Caco-2 (cell line): ENCODE measurements at regions of chr12 and their contacts with region 1.

Region 1: DNA sequence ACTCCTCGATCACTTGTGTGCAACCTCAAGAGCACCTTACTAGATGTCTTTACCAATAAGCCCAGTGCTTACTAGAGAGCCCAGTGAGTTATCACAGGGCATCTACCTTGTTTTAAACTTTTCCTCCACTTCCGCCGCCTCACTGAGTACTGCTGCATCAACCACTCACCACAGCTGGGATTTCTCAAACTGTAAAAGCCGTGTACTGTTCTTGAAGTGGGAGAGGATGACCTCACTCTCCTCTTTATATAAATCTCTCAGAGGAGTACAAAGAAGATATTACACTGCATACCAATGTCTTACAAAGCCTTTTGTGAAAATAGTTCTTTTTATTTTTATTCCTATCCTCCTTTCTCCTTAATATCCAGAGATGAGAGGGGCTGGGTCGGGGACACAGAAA is 94.1 kb downstream of the PLCZ1 start:
- DNase-seq: no peak
- H3K4me3 ChIP-seq: no peak overlapping the region
- H3K4me3 Mint-ChIP-seq: no peak overlapping the region
- H3K27ac Mint-ChIP-seq: no peak overlapping the region
- H3K4me1 ChIP-seq: no peaks in the 10 kb centered on the region
- H3K4me1 Mint-ChIP-seq: no peaks in the 10 kb centered on the region
- H3K27me3 ChIP-seq: no peaks in the 10 kb centered on the region; the same call in 1 of the 2 replicates
- H3K27me3 Mint-ChIP-seq: peaks cover 18% of the 10 kb centered on the region
- CTCF ChIP-seq: no peak

Region 2: GRCh38 chr12:17928708-17929366 is 714.8 kb before region 1 on chr12:
- CTCF ChIA-PET with region 1: no interaction called
- POLR2A ChIA-PET with region 1: no interaction called
- intact Hi-C with region 1: no loop called
- DNase-seq: peak; percentile 33 to 61
- H3K4me3 ChIP-seq: no peak overlapping the region
- H3K4me3 Mint-ChIP-seq: peak overlapping the region; percentile 40
- H3K27ac Mint-ChIP-seq: peak overlapping the region; percentile 41
- H3K4me1 ChIP-seq: peaks cover 18% of the 10 kb centered on the region
- H3K4me1 Mint-ChIP-seq: peaks cover 7% of the 10 kb centered on the region
- H3K27me3 ChIP-seq: no peaks in the 10 kb centered on the region
- H3K27me3 Mint-ChIP-seq: no peaks in the 10 kb centered on the region
- CTCF ChIP-seq: peak; percentile 41 to 47

Region 3: GRCh38 chr12:18612971-18613370 is 30.7 kb before region 1 on chr12:
- CTCF ChIA-PET with region 1: no interaction called
- POLR2A ChIA-PET with region 1: no interaction called
- intact Hi-C with region 1: no loop called
- DNase-seq: no peak
- H3K4me3 ChIP-seq: no peak overlapping the region
- H3K4me3 Mint-ChIP-seq: no peak overlapping the region
- H3K27ac Mint-ChIP-seq: no peak overlapping the region
- H3K4me1 ChIP-seq: no peaks in the 10 kb centered on the region
- H3K4me1 Mint-ChIP-seq: no peaks in the 10 kb centered on the region
- H3K27me3 ChIP-seq: no peaks in the 10 kb centered on the region
- H3K27me3 Mint-ChIP-seq: peaks cover 3% of the 10 kb centered on the region
- CTCF ChIP-seq: no peak

Region 4: DNA sequence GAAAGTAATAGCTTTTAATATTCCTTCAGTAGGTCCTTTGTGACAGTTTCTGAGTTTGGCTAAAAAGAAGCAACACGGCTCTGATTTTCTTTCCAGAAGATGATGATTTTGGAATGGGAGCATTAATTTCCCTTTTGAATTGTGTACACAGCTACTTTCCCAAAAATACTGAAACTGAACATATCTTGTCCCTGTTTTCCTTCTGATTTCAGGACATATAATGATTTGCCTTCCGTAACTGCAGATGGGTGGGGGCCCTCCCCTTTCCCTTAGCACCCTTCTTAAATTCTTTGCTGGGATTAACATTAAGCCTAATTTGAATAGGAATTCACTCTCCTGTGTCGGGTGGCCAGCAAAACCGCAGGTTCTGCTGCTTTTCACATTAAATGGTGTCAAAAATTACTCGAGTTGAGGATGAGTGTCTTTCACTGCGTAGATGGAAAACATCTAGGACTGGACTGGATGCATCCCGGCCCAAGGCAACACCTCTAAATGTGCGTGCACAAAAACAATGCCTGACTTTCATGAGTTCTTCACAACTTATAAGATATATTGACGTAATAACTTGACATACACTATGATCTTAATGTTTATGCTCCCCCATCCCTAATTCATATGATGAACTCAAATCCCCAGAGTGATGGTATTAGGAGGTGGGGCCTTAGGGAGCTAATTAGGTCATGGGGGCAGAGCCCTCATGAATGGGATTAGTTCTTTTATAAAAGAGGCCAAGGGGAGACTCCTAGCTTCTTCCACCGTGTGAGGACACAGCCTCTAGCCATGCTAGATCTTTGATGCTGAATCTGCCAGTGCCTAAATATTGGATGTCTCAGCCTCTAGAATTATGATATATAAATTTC is 953.7 kb after region 1 on chr12:
- CTCF ChIA-PET with region 1: no interaction called
- POLR2A ChIA-PET with region 1: interaction called, 11 read pairs
- intact Hi-C with region 1: no loop called
- DNase-seq: no peak
- H3K4me3 ChIP-seq: no peak overlapping the region
- H3K4me3 Mint-ChIP-seq: no peak overlapping the region
- H3K27ac Mint-ChIP-seq: no peak overlapping the region
- H3K4me1 ChIP-seq: no peaks in the 10 kb centered on the region
- H3K4me1 Mint-ChIP-seq: no peaks in the 10 kb centered on the region
- H3K27me3 ChIP-seq: no peaks in the 10 kb centered on the region
- H3K27me3 Mint-ChIP-seq: peaks cover 5% of the 10 kb centered on the region
- CTCF ChIP-seq: no peak

Region 5: GRCh38 chr12:20474443-20474842 is 1830.8 kb after region 1 on chr12:
- CTCF ChIA-PET with region 1: no interaction called
- POLR2A ChIA-PET with region 1: interaction called, 12 read pairs
- intact Hi-C with region 1: no loop called
- DNase-seq: no peak
- H3K4me3 ChIP-seq: no peak overlapping the region
- H3K4me3 Mint-ChIP-seq: no peak overlapping the region
- H3K27ac Mint-ChIP-seq: no peak overlapping the region
- H3K4me1 ChIP-seq: no peaks in the 10 kb centered on the region
- H3K4me1 Mint-ChIP-seq: no peaks in the 10 kb centered on the region
- H3K27me3 ChIP-seq: no peaks in the 10 kb centered on the region
- H3K27me3 Mint-ChIP-seq: no peaks in the 10 kb centered on the region
- CTCF ChIP-seq: no peak